Activated CD8-positive, alpha-beta T cell treated with anti-CD3 and anti-CD28 coated beads, Interleukin-2, amount 10 ng/mL, durations not matched to agents 7 days and 5 days (primary cell): ENCODE measurements at regions of chr4 and their contacts with region 1.

Region 1: GRCh38 chr4:119493419-119493818 is 135.2 kb downstream of the PDE5A start:
- DNase-seq: no peak
- ATAC-seq: no peak
- H3K4me3 Mint-ChIP-seq: no peak overlapping the region
- H3K27ac Mint-ChIP-seq: no peak overlapping the region
- H3K4me1 Mint-ChIP-seq: no peaks in the 10 kb centered on the region
- H3K27me3 Mint-ChIP-seq: no peaks in the 10 kb centered on the region

Region 2: GRCh38 chr4:118905566-118905965 is 587.9 kb before region 1 on chr4:
- CTCF ChIA-PET with region 1: no interaction called
- POLR2A ChIA-PET with region 1: no interaction called
- DNase-seq: no peak
- ATAC-seq: no peak
- H3K4me3 Mint-ChIP-seq: no peak overlapping the region
- H3K27ac Mint-ChIP-seq: no peak overlapping the region
- H3K4me1 Mint-ChIP-seq: no peaks in the 10 kb centered on the region
- H3K27me3 Mint-ChIP-seq: peaks cover 17% of the 10 kb centered on the region

Region 3: GRCh38 chr4:119314356-119314755 is 179.1 kb before region 1 on chr4:
- CTCF ChIA-PET with region 1: interaction called, 15 read pairs
- POLR2A ChIA-PET with region 1: no interaction called
- DNase-seq: peak; percentile 42
- ATAC-seq: peak; percentile 65
- H3K4me3 Mint-ChIP-seq: no peak overlapping the region
- H3K27ac Mint-ChIP-seq: no peak overlapping the region
- H3K4me1 Mint-ChIP-seq: no peaks in the 10 kb centered on the region
- H3K27me3 Mint-ChIP-seq: peaks cover 41% of the 10 kb centered on the region

Region 4: GRCh38 chr4:119559044-119559647 is 65.7 kb after region 1 on chr4:
- CTCF ChIA-PET with region 1: no interaction called
- POLR2A ChIA-PET with region 1: no interaction called
- DNase-seq: no peak
- ATAC-seq: no peak
- H3K4me3 Mint-ChIP-seq: no peak overlapping the region
- H3K27ac Mint-ChIP-seq: no peak overlapping the region
- H3K4me1 Mint-ChIP-seq: no peaks in the 10 kb centered on the region
- H3K27me3 Mint-ChIP-seq: no peaks in the 10 kb centered on the region